ENCODE measurements at regions of chr17 and their contacts with region 1.

Region 1: GRCh38 chr17:64968652-64969501 is 49.6 kb upstream of the LRRC37A3 start:
- DNase-seq: peak; percentile 58
- H3K4me3 ChIP-seq: no peak overlapping the region
- H3K27ac ChIP-seq: no peak overlapping the region
- H3K4me1 ChIP-seq: peaks cover 27% of the 10 kb centered on the region
- H3K27me3 ChIP-seq: no peaks in the 10 kb centered on the region
- CTCF ChIP-seq: no peak

Region 2: GRCh38 chr17:64920026-64920418 is 48.9 kb before region 1 on chr17:
- CTCF ChIA-PET with region 1: no interaction called
- POLR2A ChIA-PET with region 1: no interaction called
- intact Hi-C with region 1: loop called (anchors 5 kb)
- DNase-seq: peak; percentile 12
- H3K4me3 ChIP-seq: peak overlapping the region; percentile 60
- H3K27ac ChIP-seq: peak overlapping the region; percentile 88
- H3K4me1 ChIP-seq: no peaks in the 10 kb centered on the region
- H3K27me3 ChIP-seq: no peaks in the 10 kb centered on the region
- CTCF ChIP-seq: no peak

Region 3: GRCh38 chr17:65055348-65056261 is 86.7 kb after region 1 on chr17:
- CTCF ChIA-PET with region 1: no interaction called
- POLR2A ChIA-PET with region 1: no interaction called
- intact Hi-C with region 1: loop called (anchors 5 kb)
- DNase-seq: peak; percentile 42
- H3K4me3 ChIP-seq: peak overlapping the region; percentile 61
- H3K27ac ChIP-seq: peak overlapping the region; percentile 95
- H3K4me1 ChIP-seq: peaks cover 10% of the 10 kb centered on the region
- H3K27me3 ChIP-seq: no peaks in the 10 kb centered on the region
- CTCF ChIP-seq: no peak

Region 4: DNA sequence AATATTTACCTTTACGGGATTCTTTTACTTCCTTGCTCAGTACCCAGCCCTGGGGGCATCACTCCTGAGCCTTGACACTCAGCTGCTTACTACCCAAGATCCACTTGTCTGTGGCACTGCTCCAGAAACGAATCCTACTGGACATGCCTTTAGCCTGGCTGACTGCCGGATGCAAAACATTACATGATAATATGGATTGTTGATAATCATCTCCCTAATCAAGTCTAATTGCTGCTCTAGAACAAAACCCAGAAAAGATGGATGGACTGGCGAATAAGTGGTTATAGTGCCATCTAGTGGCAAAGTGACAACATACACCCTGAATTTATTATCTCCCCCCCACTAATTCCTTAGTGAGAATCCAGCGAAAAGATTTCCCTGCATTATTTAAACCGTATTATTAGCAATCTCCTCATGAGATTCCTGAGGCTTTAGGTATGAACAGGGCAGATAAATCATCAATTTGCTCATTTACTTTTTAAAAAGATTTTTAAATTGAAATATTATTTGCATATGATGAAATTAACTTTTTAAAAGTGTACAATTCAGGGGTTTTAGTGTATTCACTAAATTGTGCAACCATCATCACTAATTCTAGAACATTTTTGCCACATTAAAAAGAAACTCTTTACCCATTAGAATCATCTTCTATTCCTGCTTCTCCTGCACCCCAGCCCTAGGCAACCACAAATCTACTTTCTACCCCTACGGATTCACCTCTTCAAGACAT is 229.9 kb after region 1 on chr17:
- CTCF ChIA-PET with region 1: no interaction called
- POLR2A ChIA-PET with region 1: no interaction called
- intact Hi-C with region 1: loop called (anchors 10 kb)
- DNase-seq: peak; percentile 73
- H3K4me3 ChIP-seq: no peak overlapping the region
- H3K27ac ChIP-seq: no peak overlapping the region
- H3K4me1 ChIP-seq: no peaks in the 10 kb centered on the region
- H3K27me3 ChIP-seq: no peaks in the 10 kb centered on the region
- CTCF ChIP-seq: peak; percentile 80